ENCODE measurements at regions of chr15 and their contacts with region 1.

Region 1: DNA sequence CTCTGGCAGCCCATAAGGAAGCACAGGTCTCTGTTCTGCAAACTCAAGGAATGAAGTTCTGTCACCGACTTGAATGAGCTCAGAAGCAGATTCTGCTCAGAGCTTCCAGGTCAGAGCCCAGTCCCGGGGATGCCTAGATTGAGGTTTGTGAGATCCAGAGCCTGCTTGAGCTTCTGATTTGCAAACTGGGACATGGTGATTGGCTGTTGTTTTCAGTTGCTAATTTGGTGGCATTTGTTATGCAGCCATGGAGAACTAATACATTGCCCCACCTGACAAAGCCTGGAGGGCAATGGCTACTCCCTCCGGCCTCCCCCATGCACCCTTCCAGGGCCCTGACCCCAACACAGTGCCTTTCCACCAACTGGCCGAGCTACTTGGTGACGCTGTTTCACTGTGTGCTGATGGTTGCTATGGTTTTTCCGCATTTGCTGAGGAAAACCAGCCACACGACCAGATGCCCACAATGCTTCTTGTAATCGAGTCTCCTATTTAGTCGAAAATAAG is 379.5 kb upstream of the ATP10A start:
- DNase-seq: no peak
- H3K4me3 ChIP-seq: no peak overlapping the region
- H3K27ac ChIP-seq: no peak overlapping the region
- H3K4me1 ChIP-seq: no peaks in the 10 kb centered on the region
- H3K27me3 ChIP-seq: no peaks in the 10 kb centered on the region
- CTCF ChIP-seq: no peak

Region 2: GRCh38 chr15:26295336-26296085 is 52.9 kb after region 1 on chr15:
- intact Hi-C with region 1: loop called (anchors 5 kb)
- DNase-seq: no peak
- H3K4me3 ChIP-seq: no peak overlapping the region
- H3K27ac ChIP-seq: no peak overlapping the region
- H3K4me1 ChIP-seq: no peaks in the 10 kb centered on the region
- H3K27me3 ChIP-seq: no peaks in the 10 kb centered on the region
- CTCF ChIP-seq: no peak